ENCODE measurements at regions of chr10 and their contacts with region 1.

Region 1: GRCh38 chr10:72048450-72049124 is 39.8 kb downstream of the SPOCK2 start:
- ATAC-seq: peak; percentile 61 to 90 (median 84)
- H3K4me3 ChIP-seq: no peak overlapping the region
- H3K27ac ChIP-seq: no peak overlapping the region
- H3K4me1 ChIP-seq: peaks cover 8% of the 10 kb centered on the region in 2 donors

Region 2: GRCh38 chr10:71494980-71495381 is 553.6 kb before region 1 on chr10:
- in situ Hi-C with region 1: no loop called
- ATAC-seq: no peak
- H3K4me3 ChIP-seq: no peak overlapping the region
- H3K27ac ChIP-seq: no peak overlapping the region
- H3K4me1 ChIP-seq: peaks cover 13 to 17% of the 10 kb centered on the region in 2 donors

Region 3: GRCh38 chr10:71782917-71783490 is 265.6 kb before region 1 on chr10:
- in situ Hi-C with region 1: no loop called
- ATAC-seq: peak in 3 of 8 experiments; percentile 36 to 74 (median 62)
- H3K4me3 ChIP-seq: no peak overlapping the region
- H3K27ac ChIP-seq: no peak overlapping the region
- H3K4me1 ChIP-seq: peaks cover 0 to 10% of the 10 kb centered on the region in 2 donors

Region 4: GRCh38 chr10:71921324-71922027 is 127.1 kb before region 1 on chr10:
- in situ Hi-C with region 1: loop called in 1 of 9 experiments (anchors 25 kb)
- ATAC-seq: peak; percentile 49 to 99 (median 98)
- H3K4me3 ChIP-seq: no peak overlapping the region
- H3K27ac ChIP-seq: peak overlapping the region in 1 of 2 donors; percentile 11
- H3K4me1 ChIP-seq: peaks cover 11 to 25% of the 10 kb centered on the region in 2 donors

Region 5: DNA sequence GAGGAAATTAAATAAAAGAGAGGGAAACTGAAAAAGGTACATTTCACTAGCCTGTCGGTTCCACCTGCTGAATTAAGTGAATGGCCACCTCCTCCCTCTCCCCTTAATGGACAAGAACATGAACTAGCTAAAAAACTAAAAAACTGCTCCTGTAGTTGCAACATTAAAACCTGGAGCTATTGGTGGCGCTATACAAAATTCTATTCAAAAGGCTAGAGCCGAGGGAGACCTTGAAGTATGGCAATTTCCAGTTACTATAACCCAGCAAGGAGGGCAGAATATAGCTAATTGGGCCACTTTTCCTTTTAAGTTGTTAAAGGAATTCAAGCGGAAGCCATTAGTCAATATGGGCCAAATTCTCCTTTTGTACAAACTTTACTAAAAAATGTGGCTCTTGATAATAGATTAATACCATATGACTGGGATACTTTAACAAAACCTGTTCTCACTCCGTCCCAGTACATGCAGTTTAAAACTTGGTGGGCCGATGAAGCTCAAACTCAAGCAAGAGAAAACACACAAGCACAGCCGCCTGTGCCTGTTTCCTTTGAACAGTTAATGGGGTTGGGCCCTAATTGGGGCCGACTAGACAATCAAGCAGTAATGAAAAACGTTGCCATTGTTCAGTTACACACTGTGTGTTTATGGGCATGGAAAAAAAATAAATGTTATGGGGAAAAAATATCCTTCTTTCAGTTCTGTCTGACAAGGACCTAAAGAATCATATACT is 90.9 kb before region 1 on chr10:
- in situ Hi-C with region 1: loop called in 1 of 9 experiments (anchors 10 kb)
- ATAC-seq: no peak
- H3K4me3 ChIP-seq: no peak overlapping the region
- H3K27ac ChIP-seq: no peak overlapping the region
- H3K4me1 ChIP-seq: peaks cover 0 to 7% of the 10 kb centered on the region in 2 donors

Measured in motor neuron (in vitro differentiated cells).